Natural killer cell (primary cell): ENCODE measurements at regions of chr7 and their contacts with region 1.

Region 1: GRCh38 chr7:33062782-33063443 is 337 bp upstream of the NT5C3A start:
- DNase-seq: peak; percentile 89 to 96
- ATAC-seq: peak; percentile 92 to 99 (median 93)
- H3K4me3 ChIP-seq: peak overlapping the region; percentile 78
- H3K4me3 Mint-ChIP-seq: peak overlapping the region; percentile 93
- H3K27ac ChIP-seq: peak overlapping the region; percentile 85
- H3K27ac Mint-ChIP-seq: peak overlapping the region; percentile 87 to 95
- H3K4me1 ChIP-seq: peaks cover 10% of the 10 kb centered on the region
- H3K4me1 Mint-ChIP-seq: peaks cover 24 to 38% of the 10 kb centered on the region in 2 donors
- H3K27me3 ChIP-seq: no peaks in the 10 kb centered on the region
- H3K27me3 Mint-ChIP-seq: peaks cover 8 to 9% of the 10 kb centered on the region in 2 donors
- CTCF ChIP-seq: no peak

Region 2: GRCh38 chr7:32490127-32490822 is 572.6 kb before region 1 on chr7 and contains the start of gene LSM5:
- intact Hi-C with region 1: loop called (anchors 2 kb)
- DNase-seq: peak; percentile 84 to 96
- ATAC-seq: peak; percentile 72 to 85 (median 79)
- H3K4me3 ChIP-seq: peak within 1 kb of the TSS; percentile 94
- H3K4me3 Mint-ChIP-seq: peak within 1 kb of the TSS; percentile 98
- H3K27ac ChIP-seq: peak within 1 kb of the TSS; percentile 89
- H3K27ac Mint-ChIP-seq: peak within 1 kb of the TSS; percentile 90 to 98
- H3K4me1 ChIP-seq: peaks cover 16% of the 10 kb centered on the region
- H3K4me1 Mint-ChIP-seq: peaks cover 18 to 37% of the 10 kb centered on the region in 2 donors
- H3K27me3 ChIP-seq: no peaks in the 10 kb centered on the region
- H3K27me3 Mint-ChIP-seq: no peaks in the 10 kb centered on the region
- CTCF ChIP-seq: no peak
- total RNA-seq, gene LSM5: 16.0 to 21.2 (median 21.1) TPM

Region 3: DNA sequence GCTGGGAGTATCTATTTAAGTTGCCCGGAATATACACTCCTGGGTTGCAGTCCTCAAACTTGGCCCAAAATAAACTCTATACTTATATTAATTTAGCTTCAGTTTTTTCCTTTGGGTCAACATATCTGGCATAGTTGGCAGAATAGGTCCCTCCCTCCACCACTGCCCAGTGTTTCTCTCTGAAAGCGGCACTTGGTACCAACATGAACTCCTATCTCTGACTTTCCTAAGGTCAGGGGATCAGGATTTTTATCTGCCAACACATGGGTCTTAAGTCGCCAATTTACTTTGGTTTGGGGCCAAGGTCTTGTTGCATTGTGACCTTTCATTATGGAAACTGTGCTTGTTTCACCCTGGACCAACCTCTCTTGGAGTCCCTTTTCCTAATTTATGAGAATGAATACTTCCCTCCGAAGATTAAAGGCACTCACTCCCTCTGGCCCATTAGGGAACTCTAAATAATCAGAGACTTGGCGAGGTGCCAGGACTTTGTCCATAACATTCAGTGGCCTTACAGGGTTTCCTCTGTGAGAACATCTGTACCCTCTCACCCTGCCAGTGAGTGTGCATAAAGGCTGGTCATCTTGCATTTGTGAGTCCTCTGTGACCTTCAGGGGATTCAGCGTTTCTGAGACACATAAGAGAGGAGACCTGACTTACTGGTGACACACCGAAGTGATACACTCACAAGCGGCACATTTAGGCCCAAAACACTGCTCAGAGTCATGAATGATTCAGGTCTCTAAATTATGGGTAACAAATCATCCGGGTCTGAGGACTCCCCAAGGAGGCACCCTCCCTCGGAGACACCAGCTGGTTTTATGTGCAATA is 125.4 kb before region 1 on chr7:
- intact Hi-C with region 1: no loop called
- DNase-seq: no peak
- ATAC-seq: no peak
- H3K4me3 ChIP-seq: no peak overlapping the region
- H3K4me3 Mint-ChIP-seq: no peak overlapping the region
- H3K27ac ChIP-seq: no peak overlapping the region
- H3K27ac Mint-ChIP-seq: no peak overlapping the region
- H3K4me1 ChIP-seq: peaks cover 8% of the 10 kb centered on the region
- H3K4me1 Mint-ChIP-seq: peaks cover 16% of the 10 kb centered on the region in 2 donors
- H3K27me3 ChIP-seq: no peaks in the 10 kb centered on the region
- H3K27me3 Mint-ChIP-seq: no peaks in the 10 kb centered on the region
- CTCF ChIP-seq: no peak

Region 4: GRCh38 chr7:33109005-33109757 is 46.3 kb after region 1 on chr7 and contains the start of gene RP9:
- intact Hi-C with region 1: loop called (anchors 2 kb)
- DNase-seq: peak; percentile 74 to 87
- ATAC-seq: peak; percentile 89 to 96 (median 94)
- H3K4me3 ChIP-seq: peak within 1 kb of the TSS; percentile 59
- H3K4me3 Mint-ChIP-seq: peak within 1 kb of the TSS; percentile 91
- H3K27ac ChIP-seq: peak within 1 kb of the TSS; percentile 51
- H3K27ac Mint-ChIP-seq: peak within 1 kb of the TSS; percentile 79 to 80
- H3K4me1 ChIP-seq: peaks cover 22% of the 10 kb centered on the region
- H3K4me1 Mint-ChIP-seq: peaks cover 34 to 39% of the 10 kb centered on the region in 2 donors
- H3K27me3 ChIP-seq: no peaks in the 10 kb centered on the region
- H3K27me3 Mint-ChIP-seq: peaks cover 23 to 30% of the 10 kb centered on the region in 2 donors
- CTCF ChIP-seq: peak; percentile 52
- total RNA-seq, gene RP9: 19.1 to 27.6 (median 21.9) TPM

Region 5: DNA sequence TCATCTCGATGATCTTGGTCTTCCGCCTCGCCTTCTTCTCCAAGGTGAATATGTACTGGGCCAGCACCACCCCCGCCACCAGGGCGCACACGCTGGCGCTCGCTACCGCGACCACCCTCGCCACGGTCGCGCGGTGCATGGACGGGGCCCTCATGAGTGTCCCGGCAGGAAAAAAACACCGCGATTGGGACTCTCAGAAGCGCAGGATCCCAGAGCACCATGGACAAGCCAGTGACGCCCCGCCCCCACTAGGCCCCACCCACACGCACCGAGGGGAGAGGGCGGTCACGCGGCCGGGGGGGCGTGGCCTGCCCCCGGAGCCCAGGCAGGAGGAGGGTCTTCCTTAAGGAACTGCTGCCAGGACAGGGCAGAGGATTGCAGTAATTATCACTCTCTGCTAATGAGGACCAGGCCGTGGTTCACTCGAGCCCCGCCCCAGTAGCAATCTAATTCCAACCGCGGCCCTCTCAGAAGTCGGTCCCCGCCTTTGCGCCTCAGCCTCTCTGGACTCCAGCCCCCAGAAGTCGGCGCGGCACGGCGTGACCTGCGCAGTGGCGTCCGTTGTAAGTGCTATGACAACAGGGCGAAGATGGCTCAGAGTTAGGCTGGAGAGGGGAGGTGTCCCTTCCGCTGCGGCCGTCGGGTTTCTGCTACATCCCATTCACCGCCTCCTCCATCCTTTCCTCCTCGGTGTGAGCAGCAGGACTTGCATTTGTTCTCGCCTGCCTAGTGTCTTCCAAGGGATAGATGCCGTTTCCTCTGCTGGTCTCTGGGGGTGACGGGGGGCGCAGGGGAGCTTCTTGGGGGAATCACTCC is 66.3 kb after region 1 on chr7 and contains the start of gene BBS9:
- intact Hi-C with region 1: loop called (anchors 1 kb)
- DNase-seq: peak; percentile 88 to 94
- ATAC-seq: peak; percentile 95 to 98 (median 97)
- H3K4me3 ChIP-seq: peak within 1 kb of the TSS; percentile 62
- H3K4me3 Mint-ChIP-seq: peak within 1 kb of the TSS; percentile 97
- H3K27ac ChIP-seq: peak within 1 kb of the TSS; percentile 42
- H3K27ac Mint-ChIP-seq: peak within 1 kb of the TSS; percentile 88 to 89
- H3K4me1 ChIP-seq: peaks cover 8% of the 10 kb centered on the region
- H3K4me1 Mint-ChIP-seq: peaks cover 11 to 20% of the 10 kb centered on the region in 2 donors
- H3K27me3 ChIP-seq: no peaks in the 10 kb centered on the region
- H3K27me3 Mint-ChIP-seq: no peaks in the 10 kb centered on the region
- CTCF ChIP-seq: no peak
- total RNA-seq, gene BBS9: 25.1 to 34.6 (median 34.4) TPM

Region 6: GRCh38 chr7:33232632-33233145 is 169.8 kb after region 1 on chr7:
- intact Hi-C with region 1: no loop called
- DNase-seq: no peak
- ATAC-seq: no peak
- H3K4me3 ChIP-seq: no peak overlapping the region
- H3K4me3 Mint-ChIP-seq: no peak overlapping the region
- H3K27ac ChIP-seq: no peak overlapping the region
- H3K27ac Mint-ChIP-seq: no peak overlapping the region
- H3K4me1 ChIP-seq: no peaks in the 10 kb centered on the region
- H3K4me1 Mint-ChIP-seq: peaks cover 4 to 9% of the 10 kb centered on the region in 2 donors
- H3K27me3 ChIP-seq: no peaks in the 10 kb centered on the region
- H3K27me3 Mint-ChIP-seq: no peaks in the 10 kb centered on the region
- CTCF ChIP-seq: no peak